Naive thymus-derived CD4-positive, alpha-beta T cell (primary cell): ENCODE measurements at regions of chr4 and their contacts with region 1.

Region 1: GRCh38 chr4:81494031-81494431 is 22.3 kb upstream of the RASGEF1B start:
- DNase-seq: peak in 4 of 9 donors; percentile 29 to 46 (median 38)
- ATAC-seq: peak; percentile 33
- H3K4me3 ChIP-seq: peak overlapping the region; percentile 47
- H3K4me3 Mint-ChIP-seq: peak overlapping the region; percentile 47 to 82 (median 76)
- H3K27ac ChIP-seq: peak overlapping the region; percentile 66
- H3K27ac Mint-ChIP-seq: peak overlapping the region; percentile 76 to 99 (median 94)
- H3K4me1 ChIP-seq: peaks cover 27 to 39% of the 10 kb centered on the region in 2 donors
- H3K4me1 Mint-ChIP-seq: peaks cover 27 to 62% (median 49%) of the 10 kb centered on the region in 7 donors
- H3K27me3 ChIP-seq: no peaks in the 10 kb centered on the region
- H3K27me3 Mint-ChIP-seq: peaks cover 0 to 8% (median 0%) of the 10 kb centered on the region in 5 donors

Region 2: GRCh38 chr4:80072744-80073472 is 1421.1 kb before region 1 on chr4 and contains the start of gene ANTXR2:
- CTCF ChIA-PET with region 1: no interaction called
- POLR2A ChIA-PET with region 1: no interaction called
- intact Hi-C with region 1: loop called in 1 of 2 experiments (anchors 10 kb)
- DNase-seq: peak; percentile 49 to 75 (median 56)
- ATAC-seq: peak; percentile 85
- H3K4me3 ChIP-seq: peak within 1 kb of the TSS; percentile 76
- H3K4me3 Mint-ChIP-seq: peak within 1 kb of the TSS; percentile 82 to 99 (median 96)
- H3K27ac ChIP-seq: peak within 1 kb of the TSS; percentile 86
- H3K27ac Mint-ChIP-seq: peak within 1 kb of the TSS; percentile 88 to 98 (median 96)
- H3K4me1 ChIP-seq: peaks cover 23 to 29% of the 10 kb centered on the region in 2 donors
- H3K4me1 Mint-ChIP-seq: peaks cover 25 to 76% (median 62%) of the 10 kb centered on the region in 7 donors
- H3K27me3 ChIP-seq: no peaks in the 10 kb centered on the region
- H3K27me3 Mint-ChIP-seq: peaks cover 0 to 3% (median 0%) of the 10 kb centered on the region in 5 donors
- total RNA-seq, gene ANTXR2: 20.3 to 69.8 (median 50.0) TPM

Region 3: GRCh38 chr4:81351654-81352445 is 142.2 kb before region 1 on chr4:
- CTCF ChIA-PET with region 1: no interaction called
- POLR2A ChIA-PET with region 1: no interaction called
- intact Hi-C with region 1: no loop called
- DNase-seq: peak; percentile 21 to 59 (median 49)
- ATAC-seq: peak; percentile 73
- H3K4me3 ChIP-seq: no peak overlapping the region
- H3K4me3 Mint-ChIP-seq: no peak overlapping the region
- H3K27ac ChIP-seq: no peak overlapping the region
- H3K27ac Mint-ChIP-seq: no peak overlapping the region
- H3K4me1 ChIP-seq: no peaks in the 10 kb centered on the region
- H3K4me1 Mint-ChIP-seq: peaks cover 0 to 2% (median 0%) of the 10 kb centered on the region in 7 donors
- H3K27me3 ChIP-seq: no peaks in the 10 kb centered on the region
- H3K27me3 Mint-ChIP-seq: peaks cover 0 to 24% (median 11%) of the 10 kb centered on the region in 5 donors

Region 4: DNA sequence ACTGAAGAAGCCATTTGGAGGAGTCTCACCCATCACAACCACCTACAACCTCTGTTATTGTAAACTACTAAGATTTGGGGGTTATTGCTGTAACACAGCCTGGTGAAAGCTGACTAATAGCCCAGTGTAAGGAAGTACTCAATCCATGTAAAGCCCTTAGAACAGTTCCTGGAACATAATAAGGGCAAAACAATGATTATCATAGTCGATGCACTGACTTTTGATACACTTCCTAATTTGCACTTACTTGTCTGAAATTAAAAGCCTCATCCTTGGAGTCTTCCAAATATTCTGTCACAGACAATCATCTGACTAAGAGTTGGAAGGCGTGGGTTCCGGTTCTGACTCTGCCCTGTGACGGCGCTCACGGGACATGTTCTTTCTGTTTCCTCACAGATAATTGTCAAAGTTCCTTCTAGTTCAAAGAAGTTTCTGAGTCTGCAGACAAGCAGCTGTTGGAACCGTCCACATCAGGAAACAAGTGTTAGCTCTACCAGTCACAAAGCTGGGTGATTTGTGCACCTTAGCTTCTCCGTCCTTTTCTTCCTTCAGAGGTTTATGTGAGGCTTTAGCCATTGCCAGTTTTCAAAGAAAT is 11.1 kb after region 1 on chr4:
- CTCF ChIA-PET with region 1: interaction called, 3 read pairs
- POLR2A ChIA-PET with region 1: interaction called, 7 read pairs
- intact Hi-C with region 1: loop called (anchors 1 kb)
- DNase-seq: peak; percentile 28 to 79 (median 69)
- ATAC-seq: peak; percentile 86
- H3K4me3 ChIP-seq: peak overlapping the region; percentile 10
- H3K4me3 Mint-ChIP-seq: peak overlapping the region; percentile 7 to 81 (median 68)
- H3K27ac ChIP-seq: peak overlapping the region; percentile 48
- H3K27ac Mint-ChIP-seq: peak overlapping the region; percentile 58 to 96 (median 93)
- H3K4me1 ChIP-seq: peaks cover 10 to 14% of the 10 kb centered on the region in 2 donors
- H3K4me1 Mint-ChIP-seq: peaks cover 22 to 56% (median 31%) of the 10 kb centered on the region in 7 donors
- H3K27me3 ChIP-seq: no peaks in the 10 kb centered on the region
- H3K27me3 Mint-ChIP-seq: peaks cover 0 to 2% (median 0%) of the 10 kb centered on the region in 5 donors

Region 5: GRCh38 chr4:81648576-81649275 is 154.7 kb after region 1 on chr4:
- CTCF ChIA-PET with region 1: no interaction called
- POLR2A ChIA-PET with region 1: no interaction called
- intact Hi-C with region 1: loop called in 1 of 2 experiments (anchors 2 kb)
- DNase-seq: peak in 8 of 9 donors; percentile 45 to 71 (median 54)
- ATAC-seq: peak; percentile 93
- H3K4me3 ChIP-seq: no peak overlapping the region
- H3K4me3 Mint-ChIP-seq: peak overlapping the region in 9 of 10 donors; percentile 45 to 71 (median 54)
- H3K27ac ChIP-seq: peak overlapping the region; percentile 0
- H3K27ac Mint-ChIP-seq: peak overlapping the region; percentile 33 to 80 (median 64)
- H3K4me1 ChIP-seq: peaks cover 12 to 16% of the 10 kb centered on the region in 2 donors
- H3K4me1 Mint-ChIP-seq: peaks cover 25 to 59% (median 48%) of the 10 kb centered on the region in 7 donors
- H3K27me3 ChIP-seq: no peaks in the 10 kb centered on the region
- H3K27me3 Mint-ChIP-seq: no peaks in the 10 kb centered on the region

Region 6: DNA sequence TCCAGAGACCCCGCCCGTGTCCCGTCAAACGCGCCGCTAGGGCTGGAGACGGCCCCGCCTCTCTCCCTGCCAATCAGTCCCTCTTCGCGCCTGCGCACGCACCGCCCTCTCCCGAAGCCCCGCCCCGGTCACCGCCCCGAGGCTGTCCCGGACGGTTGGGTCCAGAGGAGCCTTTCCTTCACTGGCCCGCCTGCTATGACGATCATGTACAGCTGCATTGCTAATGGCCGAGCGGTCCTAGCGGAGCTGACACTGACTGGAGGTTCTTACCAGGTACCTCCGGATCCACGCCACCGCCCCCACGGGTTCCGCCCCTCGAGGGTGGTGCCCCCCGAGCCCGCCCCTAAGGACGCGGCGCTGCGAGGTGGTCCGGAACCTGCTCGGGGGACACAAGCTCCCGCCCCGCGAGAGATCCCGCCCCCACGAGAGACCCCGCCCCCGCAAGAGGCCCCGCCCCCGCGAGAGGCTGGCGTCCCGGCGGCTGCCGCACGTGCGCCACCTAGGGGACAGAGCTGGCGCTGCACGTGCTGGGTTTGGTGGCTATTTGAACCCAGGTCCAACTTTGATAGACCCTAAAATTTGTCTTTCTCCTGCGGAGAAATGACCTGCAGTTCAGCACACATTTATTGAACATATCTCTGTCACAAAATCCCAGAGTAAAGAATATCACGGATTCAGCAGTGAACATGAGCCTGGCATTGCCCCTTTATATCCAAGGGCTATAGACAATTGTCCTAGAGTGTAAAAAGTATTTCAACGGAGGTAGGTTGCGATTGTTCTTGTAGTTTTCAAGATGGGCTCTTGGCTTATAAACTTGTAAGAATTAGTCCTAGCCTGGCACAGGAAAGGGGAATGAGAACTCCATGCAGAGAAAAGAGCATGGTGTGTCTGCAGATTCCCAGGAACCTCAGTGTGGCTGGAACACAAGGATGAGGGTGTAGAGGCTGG is 791.1 kb after region 1 on chr4:
- CTCF ChIA-PET with region 1: no interaction called
- POLR2A ChIA-PET with region 1: no interaction called
- intact Hi-C with region 1: loop called in 1 of 2 experiments (anchors 1 kb)
- DNase-seq: peak; percentile 97 to 100 (median 99)
- ATAC-seq: peak; percentile 94
- H3K4me3 ChIP-seq: peak overlapping the region; percentile 55
- H3K4me3 Mint-ChIP-seq: peak overlapping the region; percentile 70 to 91 (median 86)
- H3K27ac ChIP-seq: peak overlapping the region; percentile 71
- H3K27ac Mint-ChIP-seq: peak overlapping the region; percentile 53 to 94 (median 83)
- H3K4me1 ChIP-seq: peaks cover 4 to 11% of the 10 kb centered on the region in 2 donors
- H3K4me1 Mint-ChIP-seq: peaks cover 9 to 22% (median 13%) of the 10 kb centered on the region in 7 donors
- H3K27me3 ChIP-seq: no peaks in the 10 kb centered on the region
- H3K27me3 Mint-ChIP-seq: peaks cover 0 to 28% (median 0%) of the 10 kb centered on the region in 5 donors

Region 7: GRCh38 chr4:82900331-82901128 is 1406.5 kb after region 1 on chr4 and contains the start of gene THAP9:
- CTCF ChIA-PET with region 1: no interaction called
- POLR2A ChIA-PET with region 1: no interaction called
- intact Hi-C with region 1: loop called in 1 of 2 experiments (anchors 5 kb)
- DNase-seq: peak; percentile 92 to 100 (median 98)
- ATAC-seq: peak; percentile 91
- H3K4me3 ChIP-seq: peak within 1 kb of the TSS; percentile 91
- H3K4me3 Mint-ChIP-seq: no peak within 1 kb of the TSS
- H3K27ac ChIP-seq: peak within 1 kb of the TSS; percentile 98
- H3K27ac Mint-ChIP-seq: no peak within 1 kb of the TSS
- H3K4me1 ChIP-seq: peaks cover 13 to 15% of the 10 kb centered on the region in 2 donors
- H3K4me1 Mint-ChIP-seq: peaks cover 0 to 30% (median 15%) of the 10 kb centered on the region in 7 donors
- H3K27me3 ChIP-seq: no peaks in the 10 kb centered on the region
- H3K27me3 Mint-ChIP-seq: peaks cover 0 to 2% (median 0%) of the 10 kb centered on the region in 5 donors
- total RNA-seq, gene THAP9: 2.2 to 4.9 (median 4.4) TPM

Region 8: DNA sequence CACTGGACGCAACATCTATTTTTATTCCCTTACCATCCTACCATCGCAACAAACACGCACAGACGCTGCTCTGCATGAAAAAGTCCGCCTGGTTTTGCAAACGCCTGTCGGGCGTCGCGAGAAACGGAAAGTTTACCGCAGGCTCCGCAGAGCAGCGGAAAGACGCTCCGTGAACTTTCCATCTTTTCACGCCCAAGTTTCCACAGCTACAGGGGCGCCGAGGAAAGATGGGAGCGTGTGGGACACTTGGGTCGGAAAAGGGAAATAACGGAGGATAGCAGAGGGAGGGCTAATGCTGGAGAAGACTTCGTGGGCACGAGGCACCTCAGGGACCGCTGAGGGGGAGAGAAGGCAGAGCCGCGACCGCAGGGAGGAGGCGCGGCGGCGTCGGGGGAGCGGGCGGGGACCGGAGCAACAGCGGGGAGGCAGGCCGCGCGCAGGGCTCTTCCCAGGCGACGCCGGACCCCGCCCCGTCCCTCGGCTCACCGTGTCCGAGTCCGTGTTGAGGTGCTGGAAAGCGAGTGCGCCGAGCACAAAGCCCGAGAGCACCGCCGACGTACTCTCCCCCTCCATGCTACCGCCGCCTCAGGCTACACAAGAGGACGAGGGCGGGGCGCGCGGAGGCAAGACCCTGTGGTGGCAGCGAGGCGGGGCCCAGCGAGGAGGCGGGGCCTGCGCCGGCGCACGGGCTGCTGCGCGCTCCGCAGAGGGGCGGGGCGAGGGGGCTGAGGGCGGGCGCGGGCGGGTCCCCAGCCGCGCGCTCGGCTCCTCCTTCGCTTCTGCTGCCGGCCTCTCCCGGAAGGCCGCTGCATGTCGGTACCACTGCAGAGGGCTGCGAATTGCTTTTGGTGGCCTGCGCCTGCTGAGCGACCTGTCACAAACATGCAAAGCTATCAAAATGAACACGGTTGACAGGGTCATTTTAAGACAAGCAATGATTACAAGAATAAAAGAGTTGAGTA is 1990.8 kb after region 1 on chr4 and contains the start of gene ABRAXAS1:
- CTCF ChIA-PET with region 1: no interaction called
- POLR2A ChIA-PET with region 1: no interaction called
- intact Hi-C with region 1: loop called in 1 of 2 experiments (anchors 2 kb)
- DNase-seq: peak; percentile 91 to 97 (median 96)
- ATAC-seq: peak; percentile 98
- H3K4me3 ChIP-seq: peak within 1 kb of the TSS; percentile 93
- H3K4me3 Mint-ChIP-seq: peak within 1 kb of the TSS; percentile 92 to 99 (median 98)
- H3K27ac ChIP-seq: peak within 1 kb of the TSS; percentile 86
- H3K27ac Mint-ChIP-seq: peak within 1 kb of the TSS; percentile 93 to 99 (median 98)
- H3K4me1 ChIP-seq: peaks cover 4 to 11% of the 10 kb centered on the region in 2 donors
- H3K4me1 Mint-ChIP-seq: peaks cover 15 to 49% (median 36%) of the 10 kb centered on the region in 7 donors
- H3K27me3 ChIP-seq: no peaks in the 10 kb centered on the region
- H3K27me3 Mint-ChIP-seq: peaks cover 0 to under 1% (median 0%) of the 10 kb centered on the region in 5 donors
- total RNA-seq, gene ABRAXAS1: 13.9 to 47.6 (median 24.9) TPM